Ascending aorta (tissue), 2 donors: ENCODE measurements at regions of chr6 and their contacts with region 1.

Region 1: GRCh38 chr6:166627033-166627874 is at the start of gene RPS6KA2:
- DNase-seq: peak; percentile 100
- H3K4me3 ChIP-seq: peak within 1 kb of the TSS; percentile 91 to 92
- H3K27ac ChIP-seq: peak within 1 kb of the TSS; percentile 80 to 90
- H3K4me1 ChIP-seq: peaks cover 0 to 2% of the 10 kb centered on the region in 2 donors
- H3K27me3 ChIP-seq: no peaks in the 10 kb centered on the region
- CTCF ChIP-seq: no peak
- total RNA-seq, gene RPS6KA2: 196 TPM

Region 2: DNA sequence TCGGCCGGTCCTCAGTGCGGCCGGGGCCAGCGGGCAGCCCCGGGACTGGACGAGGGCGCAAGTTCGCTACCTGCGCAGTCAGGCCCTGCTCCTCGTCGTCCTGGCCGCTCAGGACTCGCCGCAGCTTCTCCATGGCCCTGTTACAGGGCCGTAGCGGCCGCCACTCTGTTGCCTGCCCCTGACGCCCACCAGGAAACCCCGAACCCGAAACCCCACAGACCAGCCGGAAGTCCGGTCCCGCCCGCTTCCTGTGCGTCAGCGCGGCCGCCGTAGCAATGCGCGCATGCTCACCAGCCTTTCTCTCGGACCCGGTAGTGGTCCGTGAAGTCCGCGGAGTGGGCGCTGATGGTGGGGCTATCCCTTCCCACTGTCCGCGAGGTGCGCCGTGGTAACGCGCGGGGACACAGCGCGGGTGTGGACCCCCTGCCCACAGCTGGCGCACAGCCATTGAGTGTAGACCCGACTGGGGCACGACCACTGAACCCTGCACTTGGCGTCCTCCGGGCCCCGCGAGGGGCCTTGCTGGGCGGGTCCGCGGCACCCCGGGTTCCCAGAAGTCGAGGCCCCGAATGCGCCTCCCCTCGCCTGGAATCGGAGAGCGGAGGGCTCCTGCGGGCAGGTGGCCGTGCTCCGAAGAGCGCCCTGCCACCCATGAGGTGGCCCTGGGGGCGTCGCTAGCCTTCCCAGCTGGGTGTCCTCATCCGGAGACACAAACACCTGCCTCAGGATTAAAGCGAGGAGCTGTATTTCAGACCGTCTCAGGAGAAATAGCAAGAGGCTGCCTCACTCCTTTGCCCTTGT is 284.7 kb before region 1 on chr6 and contains the start of gene SFT2D1:
- intact Hi-C with region 1: loop called (anchors 5 kb)
- DNase-seq: peak; percentile 60 to 92
- H3K4me3 ChIP-seq: peak within 1 kb of the TSS; percentile 66 to 85
- H3K27ac ChIP-seq: peak within 1 kb of the TSS; percentile 85 to 94
- H3K4me1 ChIP-seq: peaks cover 12 to 15% of the 10 kb centered on the region in 2 donors
- H3K27me3 ChIP-seq: no peaks in the 10 kb centered on the region
- CTCF ChIP-seq: no peak
- total RNA-seq, gene SFT2D1: 77.7 TPM

Region 3: DNA sequence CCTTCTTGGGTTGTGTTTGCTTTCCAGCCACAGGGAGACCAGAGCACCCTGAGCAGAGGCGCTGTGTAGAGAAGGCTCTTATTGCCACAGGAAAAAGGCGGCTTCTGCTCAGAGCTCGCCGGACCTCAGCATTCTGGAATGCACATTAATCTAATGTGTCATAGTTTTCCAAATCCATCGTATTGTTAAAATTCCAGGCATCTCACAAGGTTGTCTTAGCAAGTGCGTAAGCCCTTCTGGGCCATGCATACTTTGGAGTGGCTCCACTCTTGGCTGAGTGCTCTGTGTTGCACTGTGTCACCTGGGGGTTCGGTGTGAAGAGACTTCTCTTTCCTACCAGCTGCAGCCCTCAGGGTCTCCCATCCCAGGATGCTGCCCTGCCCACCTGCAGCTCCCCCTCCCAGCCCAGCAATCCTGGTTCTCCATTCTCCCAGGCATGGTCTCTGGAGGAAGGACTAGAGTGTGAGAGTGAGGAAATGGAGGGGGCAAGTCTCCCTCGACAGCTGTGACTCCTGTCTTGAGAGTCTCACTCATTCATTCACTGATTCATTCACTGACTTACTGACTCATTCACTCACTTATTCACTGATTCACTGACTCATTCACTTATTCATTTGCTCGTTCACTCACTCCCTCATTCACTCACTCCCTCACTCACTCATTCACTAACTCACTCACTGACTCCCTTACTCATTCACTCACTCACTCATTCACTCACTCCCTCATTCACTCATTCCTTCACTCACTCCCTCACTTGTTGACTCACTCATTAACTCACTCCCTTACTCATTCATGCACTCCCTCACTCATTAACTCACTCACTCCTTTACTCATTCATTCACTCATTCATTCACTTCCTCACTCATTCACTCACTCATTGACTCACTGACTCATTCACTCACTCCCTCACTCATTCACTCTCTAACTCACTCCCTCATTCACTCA is 160.8 kb before region 1 on chr6:
- intact Hi-C with region 1: loop called (anchors 1 kb)
- DNase-seq: peak in 1 of 2 donors; percentile 75
- H3K4me3 ChIP-seq: peak overlapping the region in 1 of 2 donors; percentile 33
- H3K27ac ChIP-seq: peak overlapping the region; percentile 64 to 75
- H3K4me1 ChIP-seq: peaks cover 0 to 16% of the 10 kb centered on the region in 2 donors
- H3K27me3 ChIP-seq: no peaks in the 10 kb centered on the region
- CTCF ChIP-seq: no peak

Region 4: DNA sequence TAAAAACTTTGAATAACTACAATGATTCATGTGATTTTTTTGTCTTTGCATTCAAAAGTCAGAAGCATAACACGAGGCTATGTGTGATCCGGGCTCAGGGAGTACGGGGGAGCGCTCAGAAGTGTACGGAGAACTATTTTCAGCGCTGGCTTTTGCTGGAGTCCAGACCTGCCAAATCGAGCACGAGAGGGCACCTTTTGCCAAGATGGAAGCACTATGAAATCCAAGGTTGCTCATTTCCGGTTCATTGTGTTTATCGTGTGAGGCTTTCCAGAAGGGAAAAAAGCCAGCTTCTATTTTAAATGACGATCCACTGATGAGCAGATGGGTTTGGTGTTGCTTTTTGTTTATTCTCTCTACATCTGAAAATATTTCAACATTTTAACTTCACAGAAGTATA is 52.0 kb before region 1 on chr6:
- intact Hi-C with region 1: loop called (anchors 5 kb)
- DNase-seq: peak; percentile 26 to 85
- H3K4me3 ChIP-seq: no peak overlapping the region
- H3K27ac ChIP-seq: peak overlapping the region; percentile 43 to 60
- H3K4me1 ChIP-seq: peaks cover 0 to 5% of the 10 kb centered on the region in 2 donors
- H3K27me3 ChIP-seq: no peaks in the 10 kb centered on the region
- CTCF ChIP-seq: no peak

Region 5: DNA sequence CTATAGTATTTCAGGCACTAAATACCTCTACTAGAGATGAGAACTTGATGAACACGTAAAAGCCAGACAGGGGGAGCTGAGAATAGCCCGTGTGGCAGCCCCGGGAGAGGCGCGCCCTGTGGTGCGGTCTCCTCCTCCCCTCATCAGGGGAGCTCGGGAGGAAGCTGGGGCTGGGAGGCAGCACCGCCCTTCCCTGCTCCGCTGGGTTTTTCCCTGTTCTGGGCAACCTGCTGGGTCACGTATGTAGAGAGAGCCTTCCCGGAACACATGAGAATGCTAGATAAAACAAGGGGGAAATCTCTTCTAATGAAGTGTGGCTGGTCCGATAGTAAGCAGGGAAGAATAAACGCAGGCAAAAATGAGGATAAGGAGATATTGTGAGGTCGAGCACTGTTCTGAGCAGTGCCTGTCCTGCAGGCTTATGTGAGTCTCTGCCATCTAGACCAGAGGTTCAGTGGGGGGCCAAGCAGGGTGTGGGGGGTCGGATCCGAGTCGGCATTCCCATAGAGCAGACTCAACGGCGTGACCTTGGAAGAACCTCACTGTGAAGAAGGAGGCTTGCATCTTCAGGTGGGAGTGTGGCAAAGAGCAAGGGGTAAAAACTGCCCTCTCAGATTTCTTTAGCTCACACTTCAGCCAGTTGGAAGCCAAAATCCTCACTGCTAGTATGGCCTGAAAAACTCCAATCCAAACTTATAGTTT is 13.2 kb after region 1 on chr6:
- intact Hi-C with region 1: no loop called
- DNase-seq: no peak
- H3K4me3 ChIP-seq: peak overlapping the region in 1 of 2 donors; percentile 17
- H3K27ac ChIP-seq: no peak overlapping the region
- H3K4me1 ChIP-seq: no peaks in the 10 kb centered on the region
- H3K27me3 ChIP-seq: no peaks in the 10 kb centered on the region
- CTCF ChIP-seq: no peak

Region 6: GRCh38 chr6:166956444-166957086 is 329.3 kb after region 1 on chr6 and contains the start of gene RNASET2:
- intact Hi-C with region 1: loop called (anchors 2 kb)
- DNase-seq: peak; percentile 78 to 98
- H3K4me3 ChIP-seq: peak within 1 kb of the TSS; percentile 75 to 88
- H3K27ac ChIP-seq: peak within 1 kb of the TSS; percentile 73 to 86
- H3K4me1 ChIP-seq: peaks cover 0 to 5% of the 10 kb centered on the region in 2 donors
- H3K27me3 ChIP-seq: no peaks in the 10 kb centered on the region
- CTCF ChIP-seq: no peak
- total RNA-seq, gene RNASET2: 51.9 TPM